Mammary epithelial cell (primary cell): ENCODE measurements at regions of chr19 and their contacts with region 1.

Region 1: GRCh38 chr19:47243776-47244547 is 12.4 kb upstream of the CCDC9 start:
- DNase-seq: peak; percentile 92
- H3K4me3 ChIP-seq: peak overlapping the region; percentile 23 to 64 (median 28)
- H3K27ac ChIP-seq: peak overlapping the region; percentile 55
- H3K4me1 ChIP-seq: peaks cover 26% of the 10 kb centered on the region
- H3K27me3 ChIP-seq: no peaks in the 10 kb centered on the region
- CTCF ChIP-seq: peak; percentile 92 to 98

Region 2: GRCh38 chr19:47013041-47013517 is 230.9 kb before region 1 on chr19:
- CTCF ChIA-PET with region 1: no interaction called
- dilution Hi-C with region 1: no loop called
- in situ Hi-C with region 1: no loop called
- intact Hi-C with region 1: loop called (anchors 2 kb)
- DNase-seq: peak; percentile 78
- H3K4me3 ChIP-seq: no peak overlapping the region
- H3K27ac ChIP-seq: no peak overlapping the region
- H3K4me1 ChIP-seq: peaks cover 11% of the 10 kb centered on the region
- H3K27me3 ChIP-seq: no peaks in the 10 kb centered on the region
- CTCF ChIP-seq: peak; percentile 93 to 98

Region 3: GRCh38 chr19:47130591-47131227 is 113.3 kb before region 1 on chr19 and contains the start of gene SAE1:
- CTCF ChIA-PET with region 1: no interaction called
- dilution Hi-C with region 1: no loop called
- in situ Hi-C with region 1: loop called in 1 of 2 experiments (anchors 5 kb)
- intact Hi-C with region 1: loop called (anchors 1 kb)
- DNase-seq: peak; percentile 92
- H3K4me3 ChIP-seq: peak within 1 kb of the TSS; percentile 71 to 98 (median 82)
- H3K27ac ChIP-seq: peak within 1 kb of the TSS; percentile 81
- H3K4me1 ChIP-seq: peaks cover 3% of the 10 kb centered on the region
- H3K27me3 ChIP-seq: no peaks in the 10 kb centered on the region
- CTCF ChIP-seq: peak in 1 of 2 donors; percentile 66
- total RNA-seq, gene SAE1: 62.0 to 106 TPM

Region 4: GRCh38 chr19:47157431-47158321 is 86.3 kb before region 1 on chr19:
- CTCF ChIA-PET with region 1: no interaction called
- dilution Hi-C with region 1: no loop called
- in situ Hi-C with region 1: loop called (anchors 5 to 10 kb)
- intact Hi-C with region 1: no loop called
- DNase-seq: no peak
- H3K4me3 ChIP-seq: no peak overlapping the region
- H3K27ac ChIP-seq: peak overlapping the region; percentile 35
- H3K4me1 ChIP-seq: peaks cover 41% of the 10 kb centered on the region
- H3K27me3 ChIP-seq: no peaks in the 10 kb centered on the region
- CTCF ChIP-seq: peak in 1 of 2 donors; percentile 19

Region 5: DNA sequence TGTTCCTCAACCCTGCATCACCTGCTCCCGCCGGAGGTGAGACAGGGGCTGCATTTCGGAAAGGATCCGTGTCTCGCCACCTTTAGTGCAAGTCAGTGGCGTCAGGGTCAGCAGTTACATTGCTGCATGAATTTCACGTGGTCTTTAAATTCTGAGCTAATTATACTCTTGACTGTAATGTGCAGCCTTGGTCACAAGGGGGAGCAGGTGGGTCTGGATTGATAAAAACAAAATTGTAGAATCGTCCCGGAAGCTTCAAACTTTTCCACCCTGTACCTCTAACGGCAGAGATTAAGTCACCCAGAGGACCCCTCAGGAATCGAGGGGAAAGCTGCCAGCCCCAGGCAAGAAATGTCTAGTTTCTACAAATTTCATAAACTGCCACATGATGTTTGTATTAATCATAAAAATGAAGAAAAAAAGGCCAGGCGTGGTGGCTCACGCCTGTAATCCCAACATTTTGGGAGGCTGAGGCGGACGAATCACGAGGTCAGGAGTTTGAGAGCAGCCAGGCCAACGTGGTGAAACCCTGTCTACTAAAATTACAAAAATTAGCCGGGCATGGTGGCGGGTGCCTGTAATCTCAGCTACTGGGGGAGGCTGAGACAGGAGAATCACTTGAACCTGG is 33.2 kb before region 1 on chr19:
- CTCF ChIA-PET with region 1: interaction called, 35 read pairs
- dilution Hi-C with region 1: no loop called
- in situ Hi-C with region 1: no loop called
- intact Hi-C with region 1: loop called (anchors 1 kb)
- DNase-seq: peak; percentile 54
- H3K4me3 ChIP-seq: no peak overlapping the region
- H3K27ac ChIP-seq: peak overlapping the region; percentile 45
- H3K4me1 ChIP-seq: no peaks in the 10 kb centered on the region
- H3K27me3 ChIP-seq: no peaks in the 10 kb centered on the region
- CTCF ChIP-seq: peak; percentile 82 to 84

Region 6: GRCh38 chr19:47232422-47233211 is 11.3 kb before region 1 on chr19:
- CTCF ChIA-PET with region 1: interaction called, 5 read pairs
- dilution Hi-C with region 1: no loop called
- in situ Hi-C with region 1: no loop called
- intact Hi-C with region 1: loop called (anchors 1 kb)
- DNase-seq: peak; percentile 92
- H3K4me3 ChIP-seq: peak overlapping the region; percentile 43 to 56 (median 53)
- H3K27ac ChIP-seq: peak overlapping the region; percentile 90
- H3K4me1 ChIP-seq: peaks cover 43% of the 10 kb centered on the region
- H3K27me3 ChIP-seq: no peaks in the 10 kb centered on the region
- CTCF ChIP-seq: no peak